ENCODE measurements at regions of chr14 and their contacts with region 1.

Region 1: DNA sequence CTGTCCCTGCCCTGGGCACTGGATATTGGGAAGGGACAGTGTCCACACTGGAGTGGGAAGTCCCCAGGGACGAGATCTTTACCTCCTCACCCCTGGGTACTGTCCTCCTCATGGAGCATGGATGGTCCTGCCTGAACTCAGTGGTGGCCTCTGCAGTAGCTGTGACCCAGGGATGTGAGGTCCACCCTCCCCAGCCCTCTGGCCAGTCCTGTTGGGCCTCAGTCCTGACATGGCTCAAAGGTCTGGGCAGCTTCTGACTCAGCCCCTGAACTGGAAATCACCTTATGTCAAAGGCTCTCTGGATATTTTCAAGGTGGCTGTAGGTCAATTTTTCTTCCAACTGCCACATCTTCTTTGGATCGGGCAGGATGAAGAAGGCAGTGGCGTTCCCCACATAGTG is 24.4 kb downstream of the SERPINA1 start:
- DNase-seq: no peak
- H3K4me3 Mint-ChIP-seq: no peak overlapping the region
- H3K27ac Mint-ChIP-seq: no peak overlapping the region
- H3K4me1 Mint-ChIP-seq: peaks cover 5% of the 10 kb centered on the region
- H3K27me3 Mint-ChIP-seq: peaks cover 3% of the 10 kb centered on the region

Region 2: DNA sequence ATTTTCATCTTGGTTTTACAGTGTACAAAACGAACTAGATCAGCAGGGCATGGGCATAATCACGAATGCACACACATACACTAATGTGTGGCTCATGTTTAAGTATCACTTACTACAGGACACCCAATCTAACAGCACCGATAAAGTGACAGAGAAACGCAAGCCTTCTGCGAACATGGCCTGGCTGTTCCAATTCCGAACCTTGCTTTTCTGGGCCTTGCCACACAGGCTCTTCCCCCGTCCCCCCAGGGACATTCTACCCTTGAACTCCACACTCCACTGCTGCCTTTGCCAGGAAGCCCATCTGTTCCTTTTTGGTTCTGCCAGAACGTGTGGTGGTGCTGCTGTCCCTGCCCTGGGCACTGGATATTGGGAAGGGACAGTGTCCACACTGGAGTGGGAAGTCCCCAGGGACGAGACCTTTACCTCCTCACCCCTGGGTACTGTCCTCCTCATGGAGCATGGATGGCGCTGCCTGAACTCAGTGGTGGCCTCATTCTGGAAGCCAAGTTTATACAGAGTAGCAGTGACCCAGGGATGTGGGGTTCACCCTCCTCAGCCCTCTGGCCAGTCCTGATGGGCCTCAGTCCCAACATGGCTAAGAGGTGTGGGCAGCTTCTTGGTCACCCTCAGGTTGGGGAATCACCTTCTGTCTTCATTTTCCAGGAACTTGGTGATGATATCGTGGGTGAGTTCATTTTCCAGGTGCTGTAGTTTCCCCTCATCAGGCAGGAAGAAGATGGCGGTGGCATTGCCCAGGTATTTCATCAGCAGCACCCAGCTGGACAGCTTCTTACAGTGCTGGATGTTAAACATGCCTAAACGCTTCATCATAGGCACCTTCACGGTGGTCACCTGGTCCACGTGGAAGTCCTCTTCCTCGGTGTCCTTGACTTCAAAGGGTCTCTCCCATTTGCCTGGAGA is 16.4 kb after region 1 on chr14:
- intact Hi-C with region 1: loop called (anchors 1 kb)
- DNase-seq: no peak
- H3K4me3 Mint-ChIP-seq: no peak overlapping the region
- H3K27ac Mint-ChIP-seq: no peak overlapping the region
- H3K4me1 Mint-ChIP-seq: no peaks in the 10 kb centered on the region
- H3K27me3 Mint-ChIP-seq: peaks cover 5% of the 10 kb centered on the region